ENCODE measurements at regions of chr9 and their contacts with region 1.

Region 1: GRCh38 chr9:104863180-104863883 is 64.6 kb downstream of the ABCA1 start:
- DNase-seq: peak in 2 of 5 donors; percentile 27 to 41
- ATAC-seq: peak; percentile 60 to 81 (median 68)
- H3K4me3 ChIP-seq: no peak overlapping the region
- H3K27ac ChIP-seq: peak overlapping the region in 2 of 12 donors; percentile 26 to 44
- H3K4me1 ChIP-seq: peaks cover 0 to 57% (median 27%) of the 10 kb centered on the region in 12 donors
- H3K27me3 ChIP-seq: no peaks in the 10 kb centered on the region
- CTCF ChIP-seq: peak; percentile 57 to 91 (median 77)
- POLR2A ChIP-seq: no peak

Region 2: DNA sequence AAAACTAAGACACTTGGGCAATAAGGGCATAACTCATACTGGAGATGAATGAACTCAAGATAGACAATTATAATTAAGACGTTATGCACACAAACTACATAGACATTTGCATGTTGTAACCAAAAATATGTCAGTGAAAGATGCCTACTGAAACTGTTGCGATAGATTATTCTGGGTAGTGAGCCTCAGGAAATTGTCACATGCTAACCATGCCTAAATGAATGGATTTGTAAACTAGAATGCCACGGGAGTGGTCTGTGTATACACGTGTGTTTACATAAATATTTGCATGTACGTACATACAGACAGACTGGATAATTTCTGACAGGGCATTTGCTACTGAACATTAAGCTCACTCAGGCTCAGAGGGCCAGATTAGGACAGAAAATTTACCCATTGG is 98.2 kb before region 1 on chr9:
- intact Hi-C with region 1: no loop called
- DNase-seq: no peak
- ATAC-seq: no peak
- H3K4me3 ChIP-seq: peak overlapping the region in 9 of 12 donors; percentile 64 to 93 (median 80)
- H3K27ac ChIP-seq: peak overlapping the region in 3 of 12 donors; percentile 8 to 38 (median 15)
- H3K4me1 ChIP-seq: peaks cover 3 to 30% (median 13%) of the 10 kb centered on the region in 12 donors
- H3K27me3 ChIP-seq: no peaks in the 10 kb centered on the region
- CTCF ChIP-seq: no peak
- POLR2A ChIP-seq: no peak

Region 3: GRCh38 chr9:105064315-105065097 is 201.2 kb after region 1 on chr9:
- intact Hi-C with region 1: loop called in 2 of 10 experiments (anchors 10 kb)
- DNase-seq: peak; percentile 87 to 96 (median 93)
- ATAC-seq: peak; percentile 97 to 98 (median 98)
- H3K4me3 ChIP-seq: peak overlapping the region in 3 of 12 donors; percentile 8 to 29 (median 9)
- H3K27ac ChIP-seq: peak overlapping the region in 11 of 12 donors; percentile 55 to 92 (median 72)
- H3K4me1 ChIP-seq: peaks cover 7 to 38% (median 20%) of the 10 kb centered on the region in 12 donors
- H3K27me3 ChIP-seq: no peaks in the 10 kb centered on the region
- CTCF ChIP-seq: peak in 1 of 12 donors; percentile 10
- POLR2A ChIP-seq: peak in 1 of 2 donors; percentile 18

Region 4: DNA sequence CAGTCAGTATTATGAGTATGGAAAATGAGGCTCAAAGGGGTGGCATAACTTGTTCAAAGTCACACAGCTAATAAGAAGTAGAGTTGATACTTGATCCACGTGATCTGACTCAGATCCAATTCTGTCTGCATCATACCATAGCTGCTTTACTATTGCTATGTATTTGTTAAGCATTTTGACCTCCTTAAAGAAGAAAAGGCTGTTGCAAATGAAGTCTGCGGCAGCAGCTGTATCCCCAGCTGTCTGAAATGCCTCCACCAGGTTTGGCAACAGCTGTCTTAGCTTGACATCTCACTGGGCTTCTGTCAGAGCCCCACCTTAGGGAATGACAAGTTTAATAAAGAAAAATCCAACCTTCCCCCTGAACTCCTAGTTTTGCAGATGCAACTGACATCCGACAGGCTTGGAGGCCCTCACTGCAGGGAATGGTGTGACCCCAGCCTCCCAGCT is 305.6 kb after region 1 on chr9:
- intact Hi-C with region 1: no loop called
- DNase-seq: peak in 2 of 5 donors; percentile 31 to 42
- ATAC-seq: peak in 2 of 4 donors; percentile 49 to 73
- H3K4me3 ChIP-seq: no peak overlapping the region
- H3K27ac ChIP-seq: no peak overlapping the region
- H3K4me1 ChIP-seq: peaks cover 0 to 9% (median 0%) of the 10 kb centered on the region in 12 donors
- H3K27me3 ChIP-seq: no peaks in the 10 kb centered on the region
- CTCF ChIP-seq: no peak
- POLR2A ChIP-seq: no peak

Measured in heart left ventricle (tissue), 16 donors.